ENCODE measurements at regions of chr1 and their contacts with region 1.

Region 1: GRCh38 chr1:167401260-167401873 is 117.0 kb downstream of the CD247 start:
- DNase-seq: peak; percentile 2
- H3K4me3 ChIP-seq: no peak overlapping the region
- H3K27ac ChIP-seq: no peak overlapping the region
- H3K27me3 ChIP-seq: no peaks in the 10 kb centered on the region
- CTCF ChIP-seq: peak; percentile 65

Region 2: DNA sequence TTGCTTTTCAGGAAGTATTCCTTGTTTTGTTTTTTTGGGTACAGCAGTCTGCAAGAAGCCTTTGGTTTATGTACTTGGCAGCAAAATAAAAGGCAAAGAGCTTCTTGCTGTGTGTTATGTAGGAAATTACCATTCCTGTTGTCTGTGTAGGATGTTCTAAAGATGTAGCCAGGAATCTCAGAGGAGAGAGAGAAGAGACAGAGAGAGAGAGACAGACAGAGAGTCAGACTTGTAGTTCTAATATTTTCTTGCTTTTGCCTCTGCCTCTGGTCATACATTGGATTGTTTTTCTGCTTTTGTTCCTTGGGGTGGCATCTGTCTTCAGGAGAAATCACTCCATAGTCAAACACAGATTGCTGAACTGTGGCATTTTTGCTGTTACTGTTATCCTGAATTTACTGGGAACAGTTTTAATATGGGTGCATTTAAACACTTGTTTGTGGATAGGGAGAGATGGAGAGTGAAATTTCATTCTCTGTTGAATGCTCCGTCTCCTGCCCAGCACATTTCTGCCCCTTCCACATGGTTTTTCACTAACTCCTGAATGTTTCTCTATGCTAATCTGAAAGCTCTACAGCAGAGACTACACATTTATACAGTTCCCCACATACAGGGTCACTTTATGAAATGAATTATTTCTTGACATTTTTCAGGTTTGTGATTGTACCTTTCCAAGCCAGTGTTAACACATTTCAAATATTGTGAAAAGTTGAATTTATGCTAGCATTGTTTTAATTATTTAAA is 130.8 kb before region 1 on chr1:
- CTCF ChIA-PET with region 1: interaction called, 32 read pairs
- POLR2A ChIA-PET with region 1: no interaction called
- DNase-seq: no peak
- H3K4me3 ChIP-seq: no peak overlapping the region
- H3K27ac ChIP-seq: no peak overlapping the region
- H3K27me3 ChIP-seq: no peaks in the 10 kb centered on the region
- CTCF ChIP-seq: no peak

Region 3: GRCh38 chr1:167387251-167387910 is 14.0 kb before region 1 on chr1:
- CTCF ChIA-PET with region 1: interaction called, 12 read pairs
- POLR2A ChIA-PET with region 1: no interaction called
- DNase-seq: no peak
- H3K4me3 ChIP-seq: no peak overlapping the region
- H3K27ac ChIP-seq: no peak overlapping the region
- H3K27me3 ChIP-seq: no peaks in the 10 kb centered on the region
- CTCF ChIP-seq: no peak

Region 4: DNA sequence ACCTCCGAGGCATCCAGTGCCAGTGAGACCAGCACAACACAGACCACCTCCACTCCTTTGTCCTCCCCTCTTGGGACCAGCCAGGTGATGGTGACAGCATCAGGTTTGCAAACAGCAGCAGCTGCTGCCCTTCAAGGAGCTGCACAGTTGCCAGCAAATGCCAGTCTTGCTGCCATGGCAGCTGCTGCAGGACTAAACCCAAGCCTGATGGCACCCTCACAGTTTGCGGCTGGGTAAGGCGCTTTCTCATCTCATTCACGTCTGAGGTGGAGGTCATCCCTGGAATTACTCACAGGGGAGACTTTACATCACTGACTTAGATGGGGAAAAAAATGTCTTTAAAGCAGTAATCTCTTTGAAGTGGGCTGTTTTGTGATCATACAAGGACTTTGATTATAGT is 10.7 kb after region 1 on chr1:
- CTCF ChIA-PET with region 1: interaction called, 10 read pairs
- POLR2A ChIA-PET with region 1: no interaction called
- DNase-seq: no peak
- H3K4me3 ChIP-seq: no peak overlapping the region
- H3K27ac ChIP-seq: no peak overlapping the region
- H3K27me3 ChIP-seq: no peaks in the 10 kb centered on the region
- CTCF ChIP-seq: no peak

Region 5: GRCh38 chr1:167467126-167467710 is 65.9 kb after region 1 on chr1:
- CTCF ChIA-PET with region 1: no interaction called
- POLR2A ChIA-PET with region 1: no interaction called
- DNase-seq: no peak
- H3K4me3 ChIP-seq: no peak overlapping the region
- H3K27ac ChIP-seq: no peak overlapping the region
- H3K27me3 ChIP-seq: peaks cover 19% of the 10 kb centered on the region
- CTCF ChIP-seq: no peak

Measured in AG04450 (cell line).